Activated CD8-positive, alpha-beta memory T cell treated with anti-CD3 and anti-CD28 coated beads, Interleukin-2, amount 10 ng/mL, durations not matched to agents 7 days and 5 days (primary cell): ENCODE measurements at regions of chr2 and their contacts with region 1.

Region 1: GRCh38 chr2:113203901-113204519 is 30.2 kb downstream of the PSD4 start:
- DNase-seq: peak; percentile 84
- ATAC-seq: peak; percentile 80
- H3K4me3 Mint-ChIP-seq: no peak overlapping the region
- H3K27ac Mint-ChIP-seq: peak overlapping the region; percentile 25
- H3K4me1 Mint-ChIP-seq: peaks cover 18% of the 10 kb centered on the region
- H3K27me3 Mint-ChIP-seq: no peaks in the 10 kb centered on the region

Region 2: DNA sequence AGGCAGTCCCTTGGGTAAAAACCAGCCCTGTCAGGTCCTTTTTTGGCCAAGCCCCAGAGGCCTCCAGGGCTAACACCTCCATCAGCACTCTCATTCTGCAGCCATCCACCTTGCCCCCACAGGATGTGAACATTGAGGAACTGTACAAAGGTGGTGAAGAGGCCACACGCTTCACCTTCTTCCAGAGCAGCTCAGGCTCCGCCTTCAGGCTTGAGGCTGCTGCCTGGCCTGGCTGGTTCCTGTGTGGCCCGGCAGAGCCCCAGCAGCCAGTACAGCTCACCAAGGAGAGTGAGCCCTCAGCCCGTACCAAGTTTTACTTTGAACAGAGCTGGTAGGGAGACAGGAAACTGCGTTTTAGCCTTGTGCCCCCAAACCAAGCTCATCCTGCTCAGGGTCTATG is 129.0 kb before region 1 on chr2:
- CTCF ChIA-PET with region 1: interaction called, 31 read pairs
- DNase-seq: peak; percentile 72
- ATAC-seq: peak; percentile 91
- H3K4me3 Mint-ChIP-seq: no peak overlapping the region
- H3K27ac Mint-ChIP-seq: peak overlapping the region; percentile 54
- H3K4me1 Mint-ChIP-seq: peaks cover 19% of the 10 kb centered on the region
- H3K27me3 Mint-ChIP-seq: peaks cover 5% of the 10 kb centered on the region

Region 3: DNA sequence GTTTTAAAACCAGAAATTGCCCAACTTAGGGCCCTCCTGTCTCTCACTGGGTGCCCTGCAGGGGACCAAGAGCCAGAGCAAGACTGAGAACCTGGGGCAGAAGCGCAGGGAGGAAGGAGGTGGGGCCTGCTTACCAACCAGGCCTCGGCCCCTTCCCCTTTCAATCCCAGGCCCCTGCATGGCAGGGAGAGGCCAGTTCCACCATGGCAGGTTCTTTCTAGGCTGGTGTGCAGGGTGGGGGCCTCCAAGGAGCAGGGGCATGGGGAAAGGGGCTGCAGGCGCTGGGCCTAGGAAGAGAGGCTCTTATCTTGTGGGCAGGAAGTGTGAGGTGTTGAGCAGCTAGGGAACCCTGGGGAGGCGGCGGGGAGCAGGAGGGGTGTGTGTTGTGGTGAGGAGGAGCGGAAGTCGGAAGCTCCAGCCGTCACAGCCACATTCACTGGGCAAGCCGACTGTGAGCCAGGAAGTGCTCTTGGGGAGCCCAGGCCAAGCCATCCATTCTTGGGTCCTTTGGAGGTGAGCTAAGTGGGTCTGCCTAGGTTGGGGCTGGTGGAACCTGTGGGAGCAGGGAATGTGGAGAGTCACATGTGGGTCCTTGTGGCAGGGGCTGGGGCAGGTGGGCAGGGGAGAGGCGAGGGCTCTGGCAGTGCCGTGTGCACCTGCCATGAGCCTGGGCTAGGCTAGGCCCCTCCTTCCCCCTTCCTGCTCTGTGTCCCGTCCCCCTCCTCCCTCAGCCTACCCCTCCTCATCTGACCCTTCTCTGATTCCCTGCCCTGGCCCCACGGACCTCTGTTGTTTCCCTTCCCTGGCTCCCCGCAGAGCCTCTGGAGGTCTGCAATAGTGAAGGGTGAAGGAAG is 30.2 kb before region 1 on chr2 and contains the start of gene PSD4:
- CTCF ChIA-PET with region 1: interaction called, 177 read pairs
- DNase-seq: peak; percentile 97
- ATAC-seq: peak; percentile 73
- H3K4me3 Mint-ChIP-seq: peak within 1 kb of the TSS; percentile 89
- H3K27ac Mint-ChIP-seq: peak within 1 kb of the TSS; percentile 93
- H3K4me1 Mint-ChIP-seq: peaks cover 69% of the 10 kb centered on the region
- H3K27me3 Mint-ChIP-seq: peaks cover 3% of the 10 kb centered on the region
- total RNA-seq, gene PSD4: 314 to 388 TPM

Region 4: DNA sequence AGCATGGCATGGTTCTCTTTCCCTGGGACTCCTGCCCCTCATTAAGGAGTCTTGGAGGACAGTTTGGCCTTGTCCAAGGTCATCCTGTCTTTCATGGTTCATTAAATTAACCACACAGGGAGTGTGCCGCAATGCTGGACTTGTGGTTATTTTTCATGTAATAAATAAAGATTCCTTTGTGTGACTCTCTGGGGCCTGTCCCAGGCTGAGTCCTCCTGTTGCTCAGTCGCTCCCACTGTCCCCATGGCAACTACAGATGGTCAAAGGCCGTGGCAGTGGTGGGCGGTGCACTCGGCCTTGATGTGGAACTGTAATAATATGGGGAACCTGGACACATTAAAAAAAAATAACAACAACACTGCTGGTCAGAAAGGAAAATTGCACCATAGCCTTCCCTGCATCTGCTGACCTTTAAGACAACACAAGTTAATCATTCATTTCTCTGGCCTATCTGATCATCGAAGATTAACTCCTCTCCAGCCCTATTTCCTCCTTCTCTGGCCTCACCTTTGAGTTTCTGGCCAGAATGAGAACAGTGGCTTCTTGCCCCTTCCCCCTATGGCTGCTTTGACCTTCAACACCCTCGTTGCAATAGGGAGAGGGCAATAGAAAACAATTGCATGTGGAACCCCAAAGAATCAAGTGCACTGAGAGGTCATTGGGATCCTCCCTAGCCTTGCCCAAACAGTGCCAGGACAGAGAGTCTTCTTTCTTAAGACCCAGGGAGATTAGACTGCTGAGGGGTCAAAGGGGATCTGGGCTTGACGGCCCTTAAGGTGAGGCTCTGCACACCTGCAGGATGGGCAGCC is 14.5 kb after region 1 on chr2:
- CTCF ChIA-PET with region 1: interaction called, 14 read pairs
- DNase-seq: no peak
- ATAC-seq: no peak
- H3K4me3 Mint-ChIP-seq: no peak overlapping the region
- H3K27ac Mint-ChIP-seq: no peak overlapping the region
- H3K4me1 Mint-ChIP-seq: peaks cover 27% of the 10 kb centered on the region
- H3K27me3 Mint-ChIP-seq: peaks cover 2% of the 10 kb centered on the region

Region 5: DNA sequence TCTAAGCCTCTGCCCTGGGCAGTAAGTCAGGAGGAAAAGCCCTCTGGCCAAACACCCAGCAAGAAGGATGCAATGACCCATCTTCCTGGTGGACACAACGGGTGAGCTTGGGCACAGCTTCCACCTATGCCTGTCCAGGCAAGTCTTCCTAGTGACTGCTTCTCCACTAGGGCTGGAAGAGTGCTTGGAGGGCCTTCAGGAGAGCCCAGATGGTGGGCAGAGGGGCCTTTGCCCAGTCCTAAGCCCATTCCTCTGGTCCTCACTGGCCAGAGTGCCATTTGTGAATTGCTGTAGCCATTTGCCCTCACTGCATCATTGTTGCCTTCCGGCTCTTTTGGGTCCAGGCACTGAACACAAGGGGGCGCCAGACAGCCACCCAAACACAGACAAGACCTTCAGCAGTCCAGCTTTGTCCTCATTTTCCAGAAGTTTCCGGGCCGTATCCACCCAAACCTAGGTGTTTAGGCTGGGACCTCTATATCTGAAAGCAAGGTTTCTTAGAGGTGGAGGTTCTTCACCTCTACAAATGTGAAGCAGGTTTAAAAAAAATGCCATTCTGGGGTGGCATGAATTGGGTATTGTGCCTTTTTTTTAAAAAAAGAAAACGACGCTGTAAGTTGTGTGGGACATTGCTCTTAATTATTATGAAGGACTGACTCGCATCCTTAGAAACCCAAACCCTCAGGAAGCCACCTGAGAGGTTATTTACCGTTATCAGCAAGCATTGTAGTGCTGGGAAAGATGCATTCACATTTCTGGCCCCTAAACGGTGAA is 45.2 kb after region 1 on chr2:
- CTCF ChIA-PET with region 1: interaction called, 37 read pairs
- DNase-seq: peak; percentile 85
- ATAC-seq: peak; percentile 61
- H3K4me3 Mint-ChIP-seq: no peak overlapping the region
- H3K27ac Mint-ChIP-seq: peak overlapping the region; percentile 66
- H3K4me1 Mint-ChIP-seq: peaks cover 53% of the 10 kb centered on the region
- H3K27me3 Mint-ChIP-seq: no peaks in the 10 kb centered on the region

Region 6: GRCh38 chr2:113390124-113390849 is 186.3 kb after region 1 on chr2:
- CTCF ChIA-PET with region 1: interaction called, 38 read pairs
- DNase-seq: peak; percentile 74
- ATAC-seq: peak; percentile 92
- H3K4me3 Mint-ChIP-seq: peak overlapping the region; percentile 62
- H3K27ac Mint-ChIP-seq: peak overlapping the region; percentile 74
- H3K4me1 Mint-ChIP-seq: peaks cover 13% of the 10 kb centered on the region
- H3K27me3 Mint-ChIP-seq: peaks cover 26% of the 10 kb centered on the region